ENCODE measurements at regions of chrX and their contacts with region 1.

Region 1: DNA sequence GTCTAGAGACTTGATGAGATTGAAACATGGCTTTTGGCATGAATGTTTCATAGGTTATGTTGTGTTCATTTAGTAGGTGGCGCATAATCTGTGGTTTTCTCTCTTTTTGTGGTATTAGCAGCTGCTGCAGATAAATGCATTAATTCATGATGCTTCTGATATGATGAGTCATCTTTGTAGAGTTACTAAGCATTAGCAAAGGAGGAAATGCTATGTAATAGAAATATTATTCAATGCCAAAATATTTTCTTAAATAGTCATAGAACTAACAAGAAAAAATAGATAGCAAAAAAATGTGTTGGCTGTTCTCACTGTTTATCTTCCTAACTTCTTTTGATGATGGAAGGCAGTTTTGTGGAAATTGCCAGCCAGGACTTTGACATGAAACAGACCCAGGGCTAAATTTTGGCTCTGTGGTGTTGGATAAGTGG is 3.6 kb downstream of the ZXDB start:
- DNase-seq: no peak
- H3K4me3 ChIP-seq: no peak overlapping the region
- H3K27ac ChIP-seq: no peak overlapping the region
- H3K4me1 ChIP-seq: peaks cover 12% of the 10 kb centered on the region
- H3K27me3 ChIP-seq: no peaks in the 10 kb centered on the region
- CTCF ChIP-seq: no peak
- POLR2A ChIP-seq: no peak

Region 2: GRCh38 chrX:57583477-57583876 is 11.9 kb before region 1 on chrX:
- intact Hi-C with region 1: no loop called
- DNase-seq: no peak
- H3K4me3 ChIP-seq: no peak overlapping the region
- H3K27ac ChIP-seq: no peak overlapping the region
- H3K4me1 ChIP-seq: no peaks in the 10 kb centered on the region
- H3K27me3 ChIP-seq: no peaks in the 10 kb centered on the region
- CTCF ChIP-seq: no peak
- POLR2A ChIP-seq: no peak

Region 3: DNA sequence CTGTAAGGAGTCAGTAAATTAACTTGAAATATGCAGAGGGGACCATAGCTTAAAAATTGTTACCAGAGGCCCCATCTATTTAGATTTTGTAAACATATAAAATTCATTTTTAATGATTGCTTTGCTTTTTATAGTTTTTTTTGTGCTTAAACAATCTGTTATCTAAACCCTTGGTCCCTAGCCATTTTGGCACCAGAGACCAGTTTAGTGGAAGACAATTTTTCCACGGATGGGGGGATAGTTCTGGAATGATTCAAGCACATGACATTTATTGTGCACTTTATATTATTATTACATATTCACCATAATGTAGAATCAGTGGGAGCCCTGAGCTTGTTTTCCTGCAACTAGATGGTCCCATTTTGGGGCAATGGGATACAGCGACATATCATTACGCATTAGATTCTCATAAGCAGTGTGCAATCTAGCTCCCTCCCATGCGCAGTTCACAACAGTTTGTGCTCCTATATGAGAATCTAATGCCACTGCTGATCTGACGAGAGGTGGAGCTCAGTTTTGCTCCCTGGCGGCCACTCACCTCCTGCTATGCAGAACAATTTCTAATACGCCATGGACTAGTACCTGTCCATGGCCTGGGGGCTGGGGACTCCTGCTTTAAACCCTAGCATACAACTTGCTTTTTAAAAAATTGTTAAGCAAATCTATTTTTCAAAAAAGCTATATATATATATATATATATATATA is 308.9 kb after region 1 on chrX:
- intact Hi-C with region 1: no loop called
- DNase-seq: no peak
- H3K4me3 ChIP-seq: no peak overlapping the region
- H3K27ac ChIP-seq: peak overlapping the region; percentile 0
- H3K4me1 ChIP-seq: no peaks in the 10 kb centered on the region
- H3K27me3 ChIP-seq: no peaks in the 10 kb centered on the region
- CTCF ChIP-seq: no peak
- POLR2A ChIP-seq: no peak

Region 4: DNA sequence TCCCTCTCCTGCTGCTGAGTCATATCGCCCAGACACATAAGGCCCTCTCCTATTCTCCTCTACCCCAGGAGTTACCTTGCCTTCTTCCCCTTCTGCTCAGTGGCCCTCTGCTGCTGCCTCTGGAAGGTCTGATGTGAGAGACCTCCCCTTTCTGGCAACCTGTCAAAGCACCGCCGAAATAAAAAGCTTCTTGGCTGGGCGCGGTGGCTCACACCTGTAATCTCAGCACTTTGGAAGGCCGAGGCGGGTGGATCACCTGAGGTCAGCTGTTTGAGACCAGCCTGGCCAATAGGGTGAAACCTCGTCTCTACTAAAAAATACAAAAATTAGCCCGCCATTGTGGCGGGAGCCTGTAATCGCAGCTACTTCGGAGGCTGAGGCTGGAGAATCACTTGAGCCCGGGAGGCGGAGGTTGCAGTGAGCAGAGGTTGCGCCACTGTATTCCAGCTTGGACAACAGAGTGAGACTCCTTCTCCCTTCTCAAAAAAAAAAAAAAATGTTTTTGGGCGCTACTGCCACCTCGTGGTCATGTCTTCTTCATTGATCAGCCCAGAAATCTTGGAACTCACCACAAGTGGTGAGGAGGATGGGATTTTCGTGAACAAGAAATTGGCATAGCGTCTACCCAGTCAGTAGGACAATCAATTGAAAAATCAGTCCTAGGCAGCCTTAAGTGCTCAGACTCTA is 323.5 kb after region 1 on chrX:
- intact Hi-C with region 1: loop called (anchors 10 kb)
- DNase-seq: no peak
- H3K4me3 ChIP-seq: no peak overlapping the region
- H3K27ac ChIP-seq: no peak overlapping the region
- H3K4me1 ChIP-seq: no peaks in the 10 kb centered on the region
- H3K27me3 ChIP-seq: no peaks in the 10 kb centered on the region
- CTCF ChIP-seq: peak in 1 of 3 experiments; percentile 19
- POLR2A ChIP-seq: no peak

Measured in vagina (tissue), 2 donors.